ENCODE measurements at regions of chr1 and their contacts with region 1.

Region 1: GRCh38 chr1:223087291-223088255 is 55.5 kb downstream of the TLR5 start:
- DNase-seq: no peak
- H3K4me3 ChIP-seq: no peak overlapping the region
- H3K27ac ChIP-seq: no peak overlapping the region
- H3K4me1 ChIP-seq: peaks cover 0 to 4% (median 0%) of the 10 kb centered on the region in 4 experiments; a peak in 1 of 7 replicates
- H3K27me3 ChIP-seq: peaks cover 0 to 5% (median 1%) of the 10 kb centered on the region in 4 experiments; a peak in 3 of 7 replicates
- CTCF ChIP-seq: no peak
- EP300 ChIP-seq: no peak
- POLR2A ChIP-seq: no peak
- RAD21 ChIP-seq: no peak

Region 2: DNA sequence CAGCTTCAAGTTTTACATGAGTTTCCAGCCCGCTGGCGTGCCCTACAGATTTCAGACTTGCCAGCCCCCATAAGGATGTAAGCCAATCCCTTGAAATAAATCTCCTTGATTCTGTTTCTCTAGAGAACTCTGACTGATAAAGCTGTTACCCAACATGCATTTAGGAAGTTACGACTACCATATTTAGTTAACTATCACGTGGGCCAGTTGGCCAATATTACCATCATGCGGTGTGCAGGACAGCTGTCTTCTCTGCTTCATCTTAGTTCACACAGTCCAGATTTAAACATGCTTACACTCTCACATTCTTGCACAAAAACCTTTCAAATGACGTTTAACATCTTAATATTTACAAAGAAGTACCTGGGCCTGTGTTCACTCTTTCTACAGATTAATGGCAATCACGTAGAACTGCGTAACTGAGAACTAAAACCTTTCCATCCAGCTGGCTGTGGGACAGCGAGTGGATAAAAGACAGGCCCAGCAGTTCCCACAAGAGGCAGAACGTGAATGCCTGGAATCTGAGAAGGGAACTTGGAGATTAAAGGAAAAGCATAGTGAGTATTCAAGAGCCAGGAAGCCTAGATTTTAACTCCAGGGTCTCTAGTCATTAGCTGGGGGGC is 329.8 kb before region 1 on chr1:
- CTCF ChIA-PET with region 1: interaction called, 12 read pairs
- POLR2A ChIA-PET with region 1: no interaction called
- DNase-seq: no peak
- H3K4me3 ChIP-seq: no peak overlapping the region
- H3K27ac ChIP-seq: no peak overlapping the region
- H3K4me1 ChIP-seq: no peaks in the 10 kb centered on the region
- H3K27me3 ChIP-seq: no peaks in the 10 kb centered on the region
- CTCF ChIP-seq: no peak
- EP300 ChIP-seq: no peak
- POLR2A ChIP-seq: no peak
- RAD21 ChIP-seq: no peak

Region 3: GRCh38 chr1:222829868-222830267 is 257.7 kb before region 1 on chr1:
- CTCF ChIA-PET with region 1: interaction called, 10 read pairs
- POLR2A ChIA-PET with region 1: no interaction called
- DNase-seq: no peak
- H3K4me3 ChIP-seq: no peak overlapping the region
- H3K27ac ChIP-seq: no peak overlapping the region
- H3K4me1 ChIP-seq: peaks cover 0 to 7% (median under 1%) of the 10 kb centered on the region in 4 experiments; a peak in 2 of 7 replicates
- H3K27me3 ChIP-seq: no peaks in the 10 kb centered on the region
- CTCF ChIP-seq: no peak
- EP300 ChIP-seq: no peak
- POLR2A ChIP-seq: no peak
- RAD21 ChIP-seq: no peak

Region 4: GRCh38 chr1:223016890-223017289 is 70.7 kb before region 1 on chr1:
- CTCF ChIA-PET with region 1: interaction called, 9 read pairs
- POLR2A ChIA-PET with region 1: interaction called, 21 read pairs
- DNase-seq: no peak
- H3K4me3 ChIP-seq: no peak overlapping the region
- H3K27ac ChIP-seq: no peak overlapping the region
- H3K4me1 ChIP-seq: peaks cover 3 to 18% (median 7%) of the 10 kb centered on the region in 4 experiments
- H3K27me3 ChIP-seq: no peaks in the 10 kb centered on the region
- CTCF ChIP-seq: peak; percentile 16 to 38 (median 31); a peak in 3 of 4 replicates
- EP300 ChIP-seq: no peak
- POLR2A ChIP-seq: no peak
- RAD21 ChIP-seq: peak; percentile 25 to 34

Region 5: GRCh38 chr1:223097713-223098112 is 10.1 kb after region 1 on chr1:
- CTCF ChIA-PET with region 1: interaction called, 47 read pairs
- POLR2A ChIA-PET with region 1: interaction called, 4 read pairs
- DNase-seq: no peak
- H3K4me3 ChIP-seq: no peak overlapping the region
- H3K27ac ChIP-seq: no peak overlapping the region
- H3K4me1 ChIP-seq: no peaks in the 10 kb centered on the region
- H3K27me3 ChIP-seq: no peaks in the 10 kb centered on the region
- CTCF ChIP-seq: no peak
- EP300 ChIP-seq: no peak
- POLR2A ChIP-seq: no peak
- RAD21 ChIP-seq: no peak

Region 6: GRCh38 chr1:223123011-223123610 is 35.5 kb after region 1 on chr1:
- CTCF ChIA-PET with region 1: interaction called, 65 read pairs
- POLR2A ChIA-PET with region 1: interaction called, 10 read pairs
- DNase-seq: no peak
- H3K4me3 ChIP-seq: no peak overlapping the region
- H3K27ac ChIP-seq: no peak overlapping the region
- H3K4me1 ChIP-seq: peaks cover 3 to 8% (median 5%) of the 10 kb centered on the region in 4 experiments; a peak in 5 of 7 replicates
- H3K27me3 ChIP-seq: peaks cover 0 to 2% (median under 1%) of the 10 kb centered on the region in 4 experiments; a peak in 1 of 7 replicates
- CTCF ChIP-seq: no peak
- EP300 ChIP-seq: no peak
- POLR2A ChIP-seq: no peak
- RAD21 ChIP-seq: no peak

Region 7: GRCh38 chr1:223289621-223290020 is 202.0 kb after region 1 on chr1:
- CTCF ChIA-PET with region 1: no interaction called
- POLR2A ChIA-PET with region 1: no interaction called
- DNase-seq: no peak
- H3K4me3 ChIP-seq: no peak overlapping the region
- H3K27ac ChIP-seq: no peak overlapping the region
- H3K4me1 ChIP-seq: no peaks in the 10 kb centered on the region
- H3K27me3 ChIP-seq: no peaks in the 10 kb centered on the region
- CTCF ChIP-seq: no peak
- EP300 ChIP-seq: no peak
- POLR2A ChIP-seq: no peak
- RAD21 ChIP-seq: no peak

Measured in H1 (cell line).